ENCODE measurements at regions of chr1 and their contacts with region 1.

Region 1: DNA sequence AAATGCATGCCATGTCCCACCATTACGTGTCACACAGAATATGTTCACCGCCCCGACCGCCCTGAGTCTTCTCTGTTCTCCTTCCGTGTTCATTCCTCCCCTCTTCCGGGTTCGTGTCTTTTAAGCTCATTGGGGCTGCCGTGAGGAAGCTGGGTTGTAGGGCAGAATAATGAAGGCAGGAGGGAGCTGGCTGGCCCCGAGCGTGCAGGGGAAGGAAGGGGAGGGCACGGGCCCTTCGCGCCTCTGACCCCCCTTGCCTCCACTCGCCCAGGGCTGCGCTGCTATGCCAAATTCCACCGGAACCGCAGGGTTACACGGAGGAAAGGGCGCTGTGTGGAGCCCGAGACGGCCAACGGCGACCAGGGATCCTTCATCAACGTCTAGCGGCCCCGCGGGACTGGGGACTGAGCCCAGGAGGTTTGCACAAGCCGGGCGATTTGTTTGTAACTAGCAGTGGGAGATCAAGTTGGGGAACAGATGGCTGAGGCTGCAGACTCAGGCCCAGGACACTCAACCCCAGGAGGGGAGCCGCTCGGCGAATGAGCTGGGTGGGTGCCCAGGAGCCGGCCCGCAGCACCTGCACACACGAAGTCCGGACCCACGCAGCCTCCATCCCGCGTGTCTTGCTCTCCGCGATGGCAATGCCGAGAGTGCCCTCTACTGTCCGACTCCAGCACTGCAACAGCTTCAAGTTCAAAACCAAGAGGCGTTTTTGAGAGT is 16.5 kb upstream of the AGTRAP start:
- DNase-seq: peak; percentile 45 to 91
- H3K4me3 ChIP-seq: peak overlapping the region; percentile 34 to 58
- H3K27ac ChIP-seq: no peak overlapping the region
- H3K4me1 ChIP-seq: peaks cover 3% of the 10 kb centered on the region in 2 donors
- H3K27me3 ChIP-seq: no peaks in the 10 kb centered on the region
- CTCF ChIP-seq: peak; percentile 85 to 98 (median 98)

Region 2: GRCh38 chr1:11650331-11650991 is 69.0 kb before region 1 on chr1:
- intact Hi-C with region 1: loop called (anchors 1 kb)
- DNase-seq: peak; percentile 43 to 88
- H3K4me3 ChIP-seq: peak overlapping the region in 1 of 2 donors; percentile 47
- H3K27ac ChIP-seq: no peak overlapping the region
- H3K4me1 ChIP-seq: peaks cover 11 to 12% of the 10 kb centered on the region in 2 donors
- H3K27me3 ChIP-seq: no peaks in the 10 kb centered on the region
- CTCF ChIP-seq: peak; percentile 67 to 84 (median 78)

Measured in ascending aorta (tissue), 2 donors.